Sciatic nerve (tissue), 2 donors: ENCODE measurements at regions of chr14 and their contacts with region 1.

Region 1: DNA sequence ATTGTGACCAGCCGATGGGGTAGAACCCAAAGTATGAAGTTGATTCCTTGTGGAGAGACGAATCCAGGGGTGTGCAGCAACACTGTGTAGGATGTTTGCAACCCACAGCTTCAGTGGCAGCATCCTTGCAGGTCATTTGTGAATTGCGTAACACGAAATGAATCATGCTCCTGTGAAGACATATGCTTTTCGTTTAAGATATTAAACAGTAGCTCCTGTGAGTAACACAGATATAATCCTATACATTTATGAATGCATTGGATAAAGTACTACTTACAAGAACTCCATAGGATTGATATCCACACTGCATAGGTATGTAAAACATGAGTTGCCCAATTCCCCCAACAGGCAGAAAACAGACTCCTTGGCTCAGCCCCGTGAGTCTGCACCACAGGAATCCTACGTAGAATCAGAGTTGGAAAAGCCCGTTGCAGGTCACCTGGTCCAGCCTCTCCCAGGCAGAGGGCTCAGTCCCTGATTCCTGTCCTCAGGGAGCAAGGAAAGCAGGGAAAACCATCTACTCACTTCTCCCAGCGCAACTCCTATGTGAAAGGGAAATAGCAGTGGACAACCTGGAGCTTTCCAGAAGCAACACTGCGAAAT is 75.8 kb downstream of the GPATCH2L start:
- DNase-seq: no peak
- ATAC-seq: no peak

Region 2: DNA sequence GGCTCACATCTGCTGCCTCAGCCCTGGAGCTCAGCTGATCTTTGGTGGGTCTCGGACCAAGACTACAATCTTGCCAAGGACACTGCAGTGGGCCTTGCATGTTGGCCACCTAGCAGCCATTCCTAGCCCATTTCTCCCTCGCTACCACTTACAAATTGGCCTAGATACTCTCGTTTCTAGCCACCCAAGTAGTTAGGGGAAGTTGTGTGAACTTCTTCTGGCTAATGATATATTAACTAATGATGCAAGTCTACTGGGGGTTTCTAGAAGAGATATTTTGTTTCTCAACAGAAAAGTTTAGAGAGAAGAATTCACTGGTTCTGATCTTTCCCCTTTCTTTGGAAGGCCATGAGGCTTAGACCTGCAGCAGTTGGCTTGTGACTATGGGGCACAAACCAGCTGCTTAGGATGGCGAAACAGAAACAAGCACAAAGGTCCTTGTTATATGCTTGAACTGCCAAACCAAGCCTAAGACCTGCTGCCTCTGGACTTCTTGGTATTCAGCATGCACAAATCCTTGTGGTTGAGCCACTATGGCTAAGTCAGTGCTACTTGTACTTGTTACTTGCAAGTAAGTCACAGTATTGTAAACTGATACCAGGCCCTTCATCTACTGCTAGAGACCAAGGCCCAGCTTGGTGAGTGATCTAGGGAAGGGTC is 106.3 kb before region 1 on chr14:
- intact Hi-C with region 1: no loop called
- DNase-seq: no peak
- ATAC-seq: no peak

Region 3: DNA sequence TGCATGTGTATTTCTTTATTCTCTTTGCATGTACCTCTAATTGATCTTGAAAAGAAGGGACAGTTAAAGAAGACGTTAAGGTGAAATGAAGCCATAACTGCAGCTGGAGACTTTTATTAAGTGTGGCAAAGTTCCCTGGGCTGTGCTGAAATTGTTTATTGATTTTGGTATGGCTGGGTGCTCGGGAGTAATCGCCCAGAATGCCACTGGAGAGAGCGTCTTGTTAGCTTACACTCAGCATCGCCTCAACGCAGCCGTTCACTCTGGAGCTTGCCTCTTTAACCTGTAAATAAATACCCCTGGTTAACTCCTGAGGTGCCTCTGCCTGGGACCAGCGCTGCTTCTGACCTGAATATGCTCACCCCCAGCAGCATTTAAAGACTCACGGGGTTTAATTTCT is 22.8 kb after region 1 on chr14:
- intact Hi-C with region 1: loop called (anchors 1 kb)
- DNase-seq: no peak
- ATAC-seq: no peak